ENCODE measurements at regions of chr5 and their contacts with region 1.

Region 1: GRCh38 chr5:21263361-21263760 is 1275.4 kb upstream of the CDH18 start:
- DNase-seq: no peak
- ATAC-seq: no peak
- H3K4me3 ChIP-seq: no peak overlapping the region
- H3K27ac ChIP-seq: no peak overlapping the region
- H3K4me1 ChIP-seq: no peaks in the 10 kb centered on the region
- H3K27me3 ChIP-seq: no peaks in the 10 kb centered on the region
- CTCF ChIP-seq: no peak
- EP300 ChIP-seq: no peak
- POLR2A ChIP-seq: no peak
- RAD21 ChIP-seq: no peak

Region 2: GRCh38 chr5:21244982-21245381 is 18.4 kb before region 1 on chr5:
- CTCF ChIA-PET with region 1: no interaction called
- POLR2A ChIA-PET with region 1: no interaction called
- in situ Hi-C with region 1: no loop called
- intact Hi-C with region 1: no loop called
- DNase-seq: no peak
- ATAC-seq: no peak
- H3K4me3 ChIP-seq: no peak overlapping the region
- H3K27ac ChIP-seq: no peak overlapping the region
- H3K4me1 ChIP-seq: no peaks in the 10 kb centered on the region
- H3K27me3 ChIP-seq: no peaks in the 10 kb centered on the region
- CTCF ChIP-seq: no peak
- EP300 ChIP-seq: no peak
- POLR2A ChIP-seq: no peak
- RAD21 ChIP-seq: no peak

Region 3: GRCh38 chr5:21424907-21425306 is 161.5 kb after region 1 on chr5:
- CTCF ChIA-PET with region 1: no interaction called
- POLR2A ChIA-PET with region 1: no interaction called
- in situ Hi-C with region 1: loop called (anchors 25 kb)
- intact Hi-C with region 1: no loop called
- DNase-seq: no peak
- ATAC-seq: no peak
- H3K4me3 ChIP-seq: no peak overlapping the region
- H3K27ac ChIP-seq: no peak overlapping the region
- H3K4me1 ChIP-seq: no peaks in the 10 kb centered on the region
- H3K27me3 ChIP-seq: no peaks in the 10 kb centered on the region
- CTCF ChIP-seq: no peak
- EP300 ChIP-seq: no peak
- POLR2A ChIP-seq: no peak
- RAD21 ChIP-seq: no peak

Measured in K562 (cell line).